Gastrocnemius medialis (tissue), 4 donors: ENCODE measurements at regions of chr18 and their contacts with region 1.

Region 1: DNA sequence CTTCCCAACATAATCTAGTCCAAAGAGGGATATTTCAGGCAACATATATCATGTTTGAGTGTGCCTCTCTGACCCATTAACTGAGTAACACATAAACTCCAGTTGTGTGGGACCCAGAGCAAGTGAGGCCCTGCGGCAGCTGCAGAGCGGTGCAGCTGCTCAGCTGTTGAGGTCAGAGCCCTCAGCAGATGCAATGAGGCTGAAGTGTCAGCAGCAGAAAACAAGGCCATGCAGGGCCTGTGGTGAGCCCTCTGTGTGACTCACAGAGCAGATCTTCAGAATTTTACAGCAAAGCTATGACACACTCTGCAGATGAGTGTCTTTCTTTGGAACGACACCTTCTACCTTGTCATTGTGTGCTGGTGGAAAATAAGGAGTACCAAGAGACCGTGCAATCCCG is 168.5 kb downstream of the CBLN2 start:
- DNase-seq: no peak
- ATAC-seq: no peak
- H3K4me3 ChIP-seq: no peak overlapping the region
- H3K27ac ChIP-seq: no peak overlapping the region
- H3K4me1 ChIP-seq: no peaks in the 10 kb centered on the region
- H3K27me3 ChIP-seq: no peaks in the 10 kb centered on the region
- CTCF ChIP-seq: no peak
- POLR2A ChIP-seq: no peak

Region 2: DNA sequence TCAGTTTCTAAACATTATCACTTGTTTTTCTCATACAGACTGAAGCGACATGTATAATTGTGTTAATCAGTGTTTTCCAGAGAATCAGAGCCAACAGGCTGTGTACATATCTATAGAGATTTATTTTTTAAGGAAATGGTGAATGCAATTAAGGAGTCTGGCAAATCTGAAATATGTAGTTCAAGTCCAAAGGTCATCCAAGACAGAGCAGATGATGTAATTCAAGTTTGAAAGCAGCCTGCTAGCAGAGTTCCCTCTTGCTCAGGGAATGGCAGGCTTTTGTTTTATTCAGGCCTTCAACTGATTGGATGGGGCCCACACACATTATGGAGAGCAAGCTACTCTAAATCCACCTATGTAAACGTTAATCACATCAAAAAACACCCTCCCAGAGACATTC is 114.0 kb before region 1 on chr18:
- in situ Hi-C with region 1: no loop called
- intact Hi-C with region 1: no loop called
- DNase-seq: no peak
- ATAC-seq: no peak
- H3K4me3 ChIP-seq: no peak overlapping the region
- H3K27ac ChIP-seq: no peak overlapping the region
- H3K4me1 ChIP-seq: no peaks in the 10 kb centered on the region
- H3K27me3 ChIP-seq: no peaks in the 10 kb centered on the region
- CTCF ChIP-seq: no peak
- POLR2A ChIP-seq: no peak

Region 3: GRCh38 chr18:72283148-72283925 is 92.3 kb before region 1 on chr18:
- in situ Hi-C with region 1: loop called in 1 of 4 experiments (anchors 25 kb)
- intact Hi-C with region 1: no loop called
- DNase-seq: no peak
- ATAC-seq: no peak
- H3K4me3 ChIP-seq: no peak overlapping the region
- H3K27ac ChIP-seq: no peak overlapping the region
- H3K4me1 ChIP-seq: no peaks in the 10 kb centered on the region
- H3K27me3 ChIP-seq: no peaks in the 10 kb centered on the region
- CTCF ChIP-seq: no peak
- POLR2A ChIP-seq: no peak

Region 4: DNA sequence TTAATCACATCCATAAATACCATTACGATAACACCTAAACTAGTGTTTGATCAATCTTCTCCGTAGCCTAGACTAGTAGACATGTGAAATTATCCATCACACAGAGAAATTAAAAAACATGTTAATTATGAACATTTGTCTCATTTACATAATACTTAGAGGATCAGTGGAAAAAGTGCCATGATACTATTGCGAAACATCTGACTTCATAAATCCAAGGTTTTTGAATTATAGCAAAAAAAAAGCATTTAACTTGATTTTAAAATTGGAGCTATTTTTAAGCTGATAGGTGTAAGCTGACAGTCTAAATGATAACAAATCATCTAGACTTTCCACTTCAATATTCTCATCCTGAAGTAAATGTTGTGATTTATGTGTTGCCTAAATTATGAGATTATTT is 116.9 kb after region 1 on chr18:
- in situ Hi-C with region 1: loop called in 1 of 4 experiments (anchors 25 kb)
- intact Hi-C with region 1: no loop called
- DNase-seq: no peak
- ATAC-seq: no peak
- H3K4me3 ChIP-seq: no peak overlapping the region
- H3K27ac ChIP-seq: no peak overlapping the region
- H3K4me1 ChIP-seq: no peaks in the 10 kb centered on the region
- H3K27me3 ChIP-seq: no peaks in the 10 kb centered on the region
- CTCF ChIP-seq: no peak
- POLR2A ChIP-seq: no peak